KBM-7 (cell line): ENCODE measurements at regions of chr15 and their contacts with region 1.

Region 1: DNA sequence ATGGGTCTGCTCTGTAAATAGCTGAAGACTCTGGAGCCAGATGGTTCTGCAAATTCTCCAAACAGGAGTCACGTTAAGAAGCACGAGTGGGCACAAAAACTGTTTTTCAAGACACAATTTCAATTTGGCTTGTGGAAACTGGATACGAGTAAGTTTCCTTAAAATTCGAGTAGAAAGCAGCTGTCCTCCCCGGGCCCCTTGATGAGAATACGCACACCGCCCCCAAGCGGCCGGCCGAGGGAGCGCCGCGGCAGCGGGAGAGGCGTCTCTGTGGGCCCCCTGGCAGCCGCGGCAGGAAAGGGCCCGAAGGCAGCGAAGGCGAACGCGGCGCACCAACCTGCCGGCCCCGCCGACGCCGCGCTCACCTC is 778 bp upstream of the THBS1 start:
- DNase-seq: peak; percentile 92

Region 2: GRCh38 chr15:39312984-39313383 is 267.1 kb before region 1 on chr15:
- in situ Hi-C with region 1: loop called (anchors 25 kb)
- DNase-seq: peak; percentile 72

Region 3: DNA sequence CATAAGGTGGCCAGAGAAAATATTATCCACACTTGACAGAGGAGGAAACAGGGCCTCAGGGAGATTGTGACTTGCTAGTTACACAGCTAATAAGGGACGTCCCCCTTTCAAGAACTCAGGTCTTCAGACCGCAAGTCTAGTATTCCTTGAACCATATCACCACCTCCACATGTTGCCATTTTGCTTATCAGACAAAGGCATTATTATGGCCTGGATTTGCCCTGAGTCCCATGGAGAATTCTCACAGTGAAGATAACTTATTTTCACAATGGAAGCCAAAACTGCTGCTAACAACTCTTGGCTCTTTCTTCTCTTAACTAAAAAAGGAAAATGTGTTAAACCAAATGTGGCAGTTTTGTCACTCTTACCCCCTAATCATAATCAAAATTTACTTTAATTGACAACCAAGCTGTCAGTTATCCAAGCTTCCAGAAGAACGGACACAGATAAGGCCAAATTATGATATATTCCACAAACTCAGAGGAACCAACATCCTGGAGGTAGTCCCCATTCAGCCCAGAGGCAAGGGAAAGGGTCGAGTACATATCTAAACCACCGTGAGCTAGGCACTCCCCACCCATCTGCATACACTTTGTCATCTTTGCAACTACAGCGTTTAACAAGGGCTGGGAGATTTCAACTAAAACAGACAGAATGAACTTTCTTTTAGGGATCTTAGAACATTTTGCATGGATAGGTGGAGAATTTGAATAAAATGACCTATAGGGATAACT is 62.8 kb before region 1 on chr15:
- in situ Hi-C with region 1: no loop called
- DNase-seq: no peak